Calu3 (cell line): ENCODE measurements at regions of chr1 and their contacts with region 1.

Region 1: GRCh38 chr1:76759950-76760349 is 107.3 kb upstream of the ST6GALNAC5 start:
- DNase-seq: peak; percentile 33
- H3K4me3 Mint-ChIP-seq: no peak overlapping the region
- H3K27ac Mint-ChIP-seq: no peak overlapping the region
- H3K4me1 Mint-ChIP-seq: no peaks in the 10 kb centered on the region
- H3K27me3 Mint-ChIP-seq: peaks cover 2% of the 10 kb centered on the region
- CTCF ChIP-seq: no peak

Region 2: DNA sequence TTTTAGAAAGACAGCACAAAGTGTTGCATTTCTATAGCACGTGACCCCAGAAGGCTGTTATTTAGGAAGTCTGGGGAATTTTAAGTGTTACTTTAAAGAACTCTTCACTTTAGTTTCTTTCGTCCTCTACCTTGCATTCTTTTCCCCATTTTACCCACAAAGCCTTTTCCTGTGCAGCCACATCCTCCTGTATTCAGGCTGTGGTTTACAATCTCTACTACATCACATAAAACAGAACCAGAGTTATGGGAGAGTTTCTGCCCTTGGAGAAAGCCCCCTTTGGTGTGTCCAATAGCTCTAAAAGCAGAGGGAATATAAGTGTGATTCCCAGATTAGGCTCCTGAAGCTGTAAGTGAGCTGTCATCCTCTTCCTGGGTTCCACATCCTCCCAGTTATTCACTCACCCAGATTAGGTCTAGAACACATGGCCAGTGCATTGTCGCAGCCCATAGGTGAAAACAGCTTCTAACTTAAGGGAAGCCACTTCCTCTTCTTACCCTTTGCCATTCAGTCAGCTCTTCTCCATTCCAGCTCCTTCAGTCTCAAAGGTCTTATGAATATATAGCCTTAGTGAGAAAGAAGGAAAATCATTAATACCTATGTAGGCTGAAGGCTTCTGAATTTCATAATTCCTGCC is 288.1 kb after region 1 on chr1:
- CTCF ChIA-PET with region 1: interaction called, 11 read pairs
- intact Hi-C with region 1: no loop called
- DNase-seq: no peak
- H3K4me3 Mint-ChIP-seq: no peak overlapping the region
- H3K27ac Mint-ChIP-seq: no peak overlapping the region
- H3K4me1 Mint-ChIP-seq: no peaks in the 10 kb centered on the region
- H3K27me3 Mint-ChIP-seq: no peaks in the 10 kb centered on the region
- CTCF ChIP-seq: no peak